ENCODE measurements at regions of chr4 and their contacts with region 1.

Region 1: DNA sequence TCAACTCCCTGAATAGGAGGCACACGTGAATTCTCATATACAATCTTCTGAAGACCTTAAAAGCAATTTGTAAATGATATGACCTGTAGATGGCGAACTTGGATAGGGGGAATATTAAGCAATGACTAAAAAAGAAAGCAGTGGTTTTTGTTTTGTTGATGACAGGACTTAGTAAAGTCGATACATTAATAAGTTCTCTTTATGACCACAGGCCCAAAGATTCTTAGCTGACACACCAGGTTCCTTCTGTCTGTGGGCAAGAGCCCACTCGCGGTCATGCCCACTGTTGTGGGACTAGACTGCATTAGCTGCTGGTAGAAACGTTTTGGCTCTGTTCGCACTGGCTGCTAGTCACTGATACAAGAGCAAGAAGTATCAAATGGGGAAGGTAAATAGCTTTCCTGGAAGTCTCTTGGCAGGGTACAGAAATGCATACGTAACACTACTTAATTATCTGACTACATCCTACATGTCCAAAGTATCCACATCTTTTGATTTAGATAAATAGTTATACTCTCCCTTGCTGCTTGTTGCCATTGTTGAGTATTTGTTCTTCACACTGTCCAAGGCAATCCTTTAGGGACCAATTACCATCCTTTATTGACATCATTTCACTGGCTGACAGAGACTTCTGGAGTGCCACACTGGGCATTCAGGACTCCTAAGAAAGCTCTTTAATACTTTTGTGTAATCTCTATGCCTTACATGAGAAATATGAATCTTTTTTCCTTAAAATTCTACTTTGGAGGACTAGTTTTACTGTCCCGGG is 31.0 kb downstream of the ALPK1 start:
- DNase-seq: no peak
- H3K4me3 ChIP-seq: no peak overlapping the region
- H3K27me3 ChIP-seq: no peaks in the 10 kb centered on the region
- CTCF ChIP-seq: peak; percentile 57

Region 2: GRCh38 chr4:112523764-112524505 is 195.8 kb after region 1 on chr4:
- CTCF ChIA-PET with region 1: interaction called, 24 read pairs
- POLR2A ChIA-PET with region 1: no interaction called
- DNase-seq: no peak
- H3K4me3 ChIP-seq: no peak overlapping the region; the same call in 1 of the 2 replicates
- H3K27me3 ChIP-seq: peaks cover 40% of the 10 kb centered on the region
- CTCF ChIP-seq: peak; percentile 67

Region 3: DNA sequence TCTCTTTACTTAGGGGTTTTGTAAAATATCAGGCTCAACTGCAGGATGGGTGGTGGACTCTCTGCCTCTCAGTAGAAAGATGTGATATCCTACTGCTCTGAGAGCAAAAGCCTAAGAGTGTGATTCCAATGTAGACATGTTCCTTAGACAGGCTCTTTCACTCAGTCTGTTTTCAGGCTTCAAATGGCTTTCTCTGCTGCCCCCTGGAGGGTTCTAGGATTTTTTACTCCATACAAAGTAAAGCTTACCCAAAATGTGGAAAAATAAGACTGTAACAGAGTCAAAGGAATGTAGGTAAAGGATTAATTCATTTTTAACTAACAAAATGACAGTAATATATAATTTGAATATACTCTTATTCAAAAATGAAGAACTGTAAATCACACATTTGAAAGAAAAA is 276.4 kb after region 1 on chr4:
- CTCF ChIA-PET with region 1: interaction called, 110 read pairs
- POLR2A ChIA-PET with region 1: no interaction called
- DNase-seq: peak; percentile 9
- H3K4me3 ChIP-seq: no peak overlapping the region
- H3K27me3 ChIP-seq: no peaks in the 10 kb centered on the region
- CTCF ChIP-seq: peak; percentile 73